Right ventricle myocardium inferior (tissue), 1 donor: ENCODE measurements at regions of chr2 and their contacts with region 1.

Region 1: DNA sequence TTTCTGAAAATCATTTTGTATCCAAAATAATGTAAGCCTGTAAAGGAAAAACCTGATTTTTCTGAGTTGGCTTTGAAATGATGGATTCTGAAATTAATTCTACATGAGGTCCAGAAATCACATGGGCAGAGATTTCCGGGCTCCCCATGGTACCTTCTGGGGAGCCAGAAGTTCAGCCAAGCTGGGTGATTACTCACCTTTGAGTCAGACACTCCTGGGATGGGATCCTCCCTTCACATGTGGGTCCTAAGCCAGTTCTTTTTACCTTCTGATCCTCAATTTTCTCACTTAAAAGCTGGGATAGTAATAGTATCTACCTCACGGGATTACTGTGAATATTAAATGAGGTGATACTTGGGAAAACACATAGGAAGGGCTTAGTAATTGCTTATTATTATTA is 179.8 kb upstream of the EPAS1 start:
- DNase-seq: no peak
- ATAC-seq: no peak

Region 2: DNA sequence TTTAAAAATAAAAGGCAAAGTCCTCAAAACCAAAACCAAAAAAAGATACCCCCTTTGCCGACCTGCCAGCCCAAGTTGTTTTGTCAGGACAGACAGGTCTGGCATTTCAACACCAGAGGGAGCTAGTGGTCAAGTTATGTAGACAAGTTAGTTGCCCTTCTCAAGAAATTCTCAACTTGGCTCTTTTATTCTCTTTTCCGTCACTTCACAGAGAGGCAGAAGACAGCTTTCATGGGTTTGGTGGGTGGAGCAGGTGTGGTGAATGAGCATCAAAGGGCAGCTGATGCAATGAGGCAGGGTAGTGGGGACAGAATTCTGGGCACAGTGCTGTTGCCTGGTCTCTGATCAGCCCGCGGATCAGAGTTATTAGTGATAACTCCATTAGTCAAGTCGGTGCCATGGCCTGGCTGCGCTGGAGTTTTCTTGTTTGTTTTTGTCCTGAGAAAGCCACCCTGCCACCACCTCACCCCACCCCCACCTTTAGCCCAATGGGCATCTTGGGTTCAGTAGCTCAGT is 123.8 kb before region 1 on chr2:
- intact Hi-C with region 1: no loop called
- DNase-seq: peak; percentile 53
- ATAC-seq: peak; percentile 62

Region 3: DNA sequence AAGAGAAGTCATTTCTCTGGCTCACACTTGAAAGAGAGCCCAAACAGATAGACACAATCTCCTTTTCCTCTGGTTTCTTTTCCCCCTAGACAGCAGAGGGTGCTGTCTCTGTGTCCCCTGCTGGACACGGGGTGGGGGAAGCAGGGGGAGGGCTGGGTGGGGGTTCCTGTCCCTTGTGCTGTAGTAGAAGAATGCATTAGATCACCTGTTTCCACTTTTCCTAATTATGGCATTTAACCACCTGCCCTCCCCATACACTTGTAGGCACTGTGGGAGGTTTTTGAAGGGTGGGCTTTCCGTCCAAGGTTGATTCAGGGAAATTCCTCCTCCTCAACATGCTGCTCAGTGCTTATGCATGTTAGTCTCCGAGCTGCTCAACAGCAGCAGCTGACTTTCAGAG is 26.4 kb before region 1 on chr2:
- intact Hi-C with region 1: loop called (anchors 2 kb)
- DNase-seq: no peak
- ATAC-seq: peak; percentile 54